Ascending aorta (tissue), 2 donors: ENCODE measurements at regions of chr13 and their contacts with region 1.

Region 1: DNA sequence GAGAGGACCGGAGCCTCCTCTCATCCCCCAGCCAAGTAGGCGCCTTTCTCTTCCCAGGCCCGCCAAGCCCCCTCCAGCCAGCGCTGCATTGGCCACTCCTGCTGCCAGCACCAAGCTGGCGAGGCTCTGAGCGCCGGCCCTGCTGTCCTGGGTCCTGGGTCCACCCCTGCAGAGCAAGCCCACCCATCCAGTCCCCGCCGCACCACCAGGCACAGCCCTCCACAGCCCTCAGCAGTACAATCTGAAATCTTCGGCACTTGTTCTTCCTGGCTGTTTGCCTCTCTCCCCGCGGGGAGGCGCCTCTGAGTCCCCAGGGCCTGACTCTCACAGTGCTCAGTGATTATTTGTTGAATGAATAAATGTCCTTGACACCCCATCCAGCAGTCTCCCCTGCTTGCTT is 236.4 kb upstream of the SGCG start:
- DNase-seq: no peak
- H3K4me3 ChIP-seq: no peak overlapping the region
- H3K27ac ChIP-seq: no peak overlapping the region
- H3K4me1 ChIP-seq: no peaks in the 10 kb centered on the region
- H3K27me3 ChIP-seq: no peaks in the 10 kb centered on the region
- CTCF ChIP-seq: no peak

Region 2: DNA sequence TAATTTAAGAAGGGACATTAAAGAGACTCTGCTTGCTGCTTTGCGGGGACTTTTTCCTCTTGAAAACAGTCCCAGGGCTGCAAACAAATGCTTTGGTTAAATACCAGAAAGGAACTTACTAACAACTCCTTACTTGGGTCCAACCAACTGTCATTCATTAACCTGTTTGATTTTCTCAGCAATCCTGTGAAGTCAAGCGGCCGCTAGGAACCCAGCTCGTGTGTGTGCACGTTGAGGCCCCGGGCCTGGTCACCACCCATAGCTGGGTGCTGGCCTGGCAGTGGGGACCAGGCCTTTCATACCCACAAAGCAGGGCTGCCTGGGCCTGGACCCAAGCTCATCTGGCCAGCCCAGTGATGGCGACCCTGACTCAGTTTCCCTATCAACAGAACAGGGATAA is 1415.7 kb after region 1 on chr13:
- intact Hi-C with region 1: loop called (anchors 10 kb)
- DNase-seq: no peak
- H3K4me3 ChIP-seq: no peak overlapping the region
- H3K27ac ChIP-seq: no peak overlapping the region
- H3K4me1 ChIP-seq: no peaks in the 10 kb centered on the region
- H3K27me3 ChIP-seq: no peaks in the 10 kb centered on the region
- CTCF ChIP-seq: no peak